ENCODE measurements at regions of chr7 and their contacts with region 1.

Region 1: DNA sequence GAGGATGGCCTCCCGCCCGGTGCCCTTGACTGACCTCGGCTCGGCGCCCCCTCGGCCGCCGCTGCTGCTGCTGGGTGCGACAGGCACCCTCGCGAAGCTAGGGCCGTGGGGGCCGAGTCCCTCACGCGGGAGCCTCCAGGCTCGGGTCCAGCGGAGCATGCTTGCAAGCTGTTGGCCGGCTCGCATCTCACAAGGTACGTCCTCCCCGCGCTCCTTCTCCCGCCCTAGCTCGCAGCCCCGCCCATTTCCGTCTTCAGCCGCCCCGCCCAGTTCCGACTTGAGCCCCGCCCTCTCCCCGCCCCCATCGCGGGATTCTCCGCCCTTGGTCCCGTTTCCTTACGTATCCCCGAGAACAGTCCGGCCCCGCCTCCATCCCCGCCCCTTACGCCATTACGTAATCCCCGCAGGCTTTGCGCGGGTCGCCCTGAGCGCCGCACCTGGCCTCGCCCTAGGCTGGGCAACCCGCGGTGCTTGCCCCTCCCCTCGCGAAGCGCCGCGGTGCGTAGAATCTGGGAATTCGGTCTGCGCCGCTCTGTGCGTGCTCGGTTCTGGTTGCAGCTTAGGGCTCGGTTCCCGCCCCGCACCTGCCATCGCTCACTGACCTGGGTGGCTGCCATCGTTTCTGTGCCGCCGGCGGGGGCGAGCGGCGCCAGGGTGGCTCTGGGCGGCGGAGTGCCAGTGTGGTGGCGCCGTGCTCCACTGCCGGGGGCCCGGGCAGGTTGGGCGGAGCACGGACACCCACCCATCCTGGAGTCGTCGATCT is at the start of gene ABHD11:
- DNase-seq: peak; percentile 99
- ATAC-seq: peak; percentile 88
- H3K4me3 Mint-ChIP-seq: peak within 1 kb of the TSS; percentile 92
- H3K27ac Mint-ChIP-seq: peak within 1 kb of the TSS; percentile 87
- H3K4me1 Mint-ChIP-seq: peaks cover 12% of the 10 kb centered on the region
- H3K27me3 Mint-ChIP-seq: no peaks in the 10 kb centered on the region
- CTCF ChIP-seq: no peak
- total RNA-seq, gene ABHD11: 12.1 and 15.9 TPM in 2 replicates

Region 2: GRCh38 chr7:73351447-73352167 is 387.2 kb before region 1 on chr7:
- CTCF ChIA-PET with region 1: no interaction called
- POLR2A ChIA-PET with region 1: no interaction called
- intact Hi-C with region 1: no loop called
- DNase-seq: no peak
- ATAC-seq: no peak
- H3K4me3 Mint-ChIP-seq: no peak overlapping the region
- H3K27ac Mint-ChIP-seq: no peak overlapping the region
- H3K4me1 Mint-ChIP-seq: no peaks in the 10 kb centered on the region
- H3K27me3 Mint-ChIP-seq: no peaks in the 10 kb centered on the region
- CTCF ChIP-seq: no peak

Region 3: DNA sequence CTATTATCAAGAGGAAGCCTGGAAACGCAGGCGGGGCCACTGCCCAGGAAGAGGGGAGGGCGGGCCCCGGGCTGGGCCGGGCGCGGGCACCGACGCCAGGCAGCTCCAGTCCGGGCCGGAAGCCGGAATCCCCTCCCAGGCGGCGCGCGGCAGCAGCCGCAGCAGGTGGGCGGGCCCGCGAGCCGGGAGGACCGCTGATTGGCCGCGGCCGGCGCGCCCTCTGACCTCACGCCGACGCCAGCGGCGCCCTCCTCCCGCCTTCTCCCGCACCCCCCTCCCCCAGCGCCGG is 181.7 kb before region 1 on chr7:
- CTCF ChIA-PET with region 1: no interaction called
- POLR2A ChIA-PET with region 1: interaction called, 6 read pairs
- intact Hi-C with region 1: loop called (anchors 1 kb)
- DNase-seq: peak; percentile 87
- ATAC-seq: peak; percentile 90
- H3K4me3 Mint-ChIP-seq: peak overlapping the region; percentile 90
- H3K27ac Mint-ChIP-seq: peak overlapping the region; percentile 87
- H3K4me1 Mint-ChIP-seq: peaks cover 28% of the 10 kb centered on the region
- H3K27me3 Mint-ChIP-seq: no peaks in the 10 kb centered on the region
- CTCF ChIP-seq: no peak

Region 4: DNA sequence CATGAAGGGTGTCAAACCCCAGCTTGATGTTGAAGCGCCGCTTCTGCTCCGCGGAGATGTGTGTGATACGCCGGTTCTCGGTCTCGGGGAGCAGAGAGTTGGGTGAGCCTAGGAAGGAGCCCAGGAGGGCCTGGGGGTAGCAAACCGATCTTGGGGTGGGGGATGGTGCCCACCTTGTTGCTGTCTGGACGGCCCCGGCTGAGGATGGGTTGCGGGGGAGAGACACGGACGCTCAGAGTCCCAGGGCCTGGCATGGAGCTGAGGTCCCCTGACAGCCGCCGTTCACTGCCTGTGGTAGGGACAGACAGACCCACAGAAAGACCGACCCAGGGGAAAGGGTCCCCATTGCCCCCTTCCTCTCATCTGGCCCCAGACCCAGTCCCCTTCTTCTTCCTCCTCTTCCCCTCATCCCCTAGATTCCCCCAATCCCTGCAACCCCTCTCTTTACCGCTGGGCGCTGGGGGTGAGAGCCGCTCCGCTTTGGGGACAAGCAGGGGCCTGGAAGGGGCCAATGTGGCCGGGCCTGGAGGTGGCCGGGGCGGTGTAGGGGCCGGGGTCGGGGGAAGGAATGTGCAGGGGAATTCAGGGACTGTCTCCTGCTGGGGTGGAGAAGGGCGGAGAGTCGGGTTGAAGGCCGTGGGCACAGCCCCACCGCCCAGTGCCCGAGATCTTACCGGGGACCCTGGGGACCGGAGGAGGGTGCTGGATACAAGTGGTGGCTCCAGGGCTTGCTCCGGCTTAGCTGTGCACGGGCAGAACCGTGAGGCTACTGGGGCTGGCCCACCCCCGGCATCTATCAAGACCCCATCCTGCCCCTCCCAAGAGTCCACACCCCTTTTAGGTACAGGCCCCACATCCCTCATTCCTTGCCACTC is 142.4 kb before region 1 on chr7:
- CTCF ChIA-PET with region 1: no interaction called
- POLR2A ChIA-PET with region 1: no interaction called
- intact Hi-C with region 1: no loop called
- DNase-seq: no peak
- ATAC-seq: no peak
- H3K4me3 Mint-ChIP-seq: no peak overlapping the region
- H3K27ac Mint-ChIP-seq: no peak overlapping the region
- H3K4me1 Mint-ChIP-seq: no peaks in the 10 kb centered on the region
- H3K27me3 Mint-ChIP-seq: peaks cover 19% of the 10 kb centered on the region
- CTCF ChIP-seq: no peak

Region 5: DNA sequence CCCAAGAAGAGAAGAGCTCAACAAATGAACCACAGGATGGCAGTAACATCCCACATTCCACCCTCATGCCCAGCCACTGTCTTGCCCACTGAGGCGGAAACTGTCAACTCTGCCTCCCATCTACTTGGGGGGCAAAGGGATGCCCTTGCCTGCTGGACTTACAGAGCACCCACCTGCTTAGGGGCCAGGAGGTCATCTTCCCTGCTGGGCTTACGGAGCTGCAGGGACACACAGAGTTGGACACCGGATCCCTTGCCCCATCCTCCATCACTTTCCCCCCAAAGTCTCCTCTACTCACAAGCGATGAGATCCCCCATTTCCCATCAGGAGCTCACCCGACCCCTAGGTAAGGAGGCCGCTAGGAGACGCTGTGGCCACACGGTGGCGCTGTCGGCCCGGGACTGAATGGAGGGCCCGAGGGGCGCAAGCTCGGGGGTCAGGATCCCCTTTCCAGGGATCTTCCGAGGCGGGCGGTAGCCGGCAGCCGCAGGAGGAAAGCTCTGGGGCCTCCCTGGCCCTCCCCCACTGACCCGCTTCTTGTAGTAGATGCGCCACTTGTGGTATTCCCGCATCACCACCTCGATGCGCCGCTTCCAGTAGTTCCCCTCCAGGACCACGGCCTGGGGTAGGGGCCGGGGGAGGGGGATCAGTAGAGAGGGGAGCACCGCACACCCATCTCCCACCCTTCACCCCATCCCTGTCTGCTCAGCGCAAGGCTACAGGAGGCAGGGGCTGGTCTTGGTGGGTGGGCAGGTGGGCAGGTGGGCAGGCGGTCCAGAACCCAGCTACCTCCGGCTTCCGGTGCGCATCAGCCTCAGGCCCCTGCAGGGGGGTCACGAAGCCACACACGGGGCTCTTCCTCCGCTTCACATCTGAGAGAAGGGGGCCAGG is 131.7 kb before region 1 on chr7:
- CTCF ChIA-PET with region 1: interaction called, 29 read pairs
- POLR2A ChIA-PET with region 1: no interaction called
- intact Hi-C with region 1: loop called (anchors 1 kb)
- DNase-seq: peak; percentile 66
- ATAC-seq: peak; percentile 67
- H3K4me3 Mint-ChIP-seq: no peak overlapping the region
- H3K27ac Mint-ChIP-seq: no peak overlapping the region
- H3K4me1 Mint-ChIP-seq: peaks cover 1% of the 10 kb centered on the region
- H3K27me3 Mint-ChIP-seq: peaks cover 39% of the 10 kb centered on the region
- CTCF ChIP-seq: no peak

Region 6: GRCh38 chr7:73683056-73683964 is 55.5 kb before region 1 on chr7 and contains the starts of genes BUD23 and DNAJC30:
- CTCF ChIA-PET with region 1: no interaction called
- POLR2A ChIA-PET with region 1: no interaction called
- intact Hi-C with region 1: loop called (anchors 1 kb)
- DNase-seq: peak; percentile 81
- ATAC-seq: peak; percentile 98
- H3K4me3 Mint-ChIP-seq: peak within 1 kb of the TSS; percentile 97
- H3K27ac Mint-ChIP-seq: peak within 1 kb of the TSS; percentile 95
- H3K4me1 Mint-ChIP-seq: peaks cover 29% of the 10 kb centered on the region
- H3K27me3 Mint-ChIP-seq: no peaks in the 10 kb centered on the region
- CTCF ChIP-seq: no peak
- total RNA-seq, gene BUD23: 69.0 and 74.8 TPM in 2 replicates
- total RNA-seq, gene DNAJC30: 13.7 and 14.2 TPM in 2 replicates

Region 7: DNA sequence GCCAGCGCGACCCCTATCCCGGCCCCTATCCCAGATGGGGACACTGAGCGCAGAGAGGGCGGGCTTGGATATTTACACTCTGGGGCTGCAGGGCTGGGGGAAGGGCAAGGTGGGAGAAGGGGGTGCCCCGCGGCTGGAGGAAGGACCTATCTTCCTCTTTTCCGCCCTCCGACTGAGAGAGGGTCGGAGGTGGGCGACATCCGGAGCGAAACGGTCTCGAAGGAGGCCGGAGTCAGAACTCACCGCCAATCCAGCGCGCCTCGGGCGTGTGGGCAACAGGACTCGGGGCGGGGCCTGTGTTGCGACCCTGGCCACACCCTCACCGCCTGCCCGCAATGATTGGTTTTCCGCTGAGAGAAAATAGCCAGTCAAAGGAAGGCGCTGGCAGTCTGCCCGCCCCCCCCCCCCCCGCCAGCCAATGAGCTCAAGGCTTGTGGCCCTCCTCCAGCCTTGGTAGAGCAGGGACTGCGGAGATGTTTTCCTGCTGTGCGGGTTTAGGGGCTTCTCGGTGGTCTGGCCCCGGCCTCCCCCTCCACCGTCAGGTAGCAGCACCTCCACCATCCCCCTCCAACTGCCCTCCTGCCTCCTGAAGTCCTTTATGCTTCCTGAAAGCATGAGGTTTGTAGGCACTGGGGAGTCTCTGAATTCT is 103.6 kb after region 1 on chr7 and contains the start of gene METTL27:
- CTCF ChIA-PET with region 1: no interaction called
- POLR2A ChIA-PET with region 1: interaction called, 8 read pairs
- intact Hi-C with region 1: loop called (anchors 5 kb)
- DNase-seq: peak; percentile 74
- ATAC-seq: peak; percentile 100
- H3K4me3 Mint-ChIP-seq: peak within 1 kb of the TSS; percentile 86
- H3K27ac Mint-ChIP-seq: peak within 1 kb of the TSS; percentile 73
- H3K4me1 Mint-ChIP-seq: peaks cover 32% of the 10 kb centered on the region
- H3K27me3 Mint-ChIP-seq: no peaks in the 10 kb centered on the region
- CTCF ChIP-seq: no peak
- total RNA-seq, gene METTL27: 0.66 and 1.7 TPM in 2 replicates

Region 8: GRCh38 chr7:74371381-74372341 is 632.9 kb after region 1 on chr7:
- CTCF ChIA-PET with region 1: no interaction called
- POLR2A ChIA-PET with region 1: no interaction called
- intact Hi-C with region 1: no loop called
- DNase-seq: no peak
- ATAC-seq: no peak
- H3K4me3 Mint-ChIP-seq: no peak overlapping the region
- H3K27ac Mint-ChIP-seq: no peak overlapping the region
- H3K4me1 Mint-ChIP-seq: peaks cover 16% of the 10 kb centered on the region
- H3K27me3 Mint-ChIP-seq: no peaks in the 10 kb centered on the region
- CTCF ChIP-seq: no peak